ENCODE measurements at regions of chr1 and their contacts with region 1.

Region 1: GRCh38 chr1:12177999-12178441 is 11.2 kb downstream of the TNFRSF1B start:
- DNase-seq: peak; percentile 74
- ATAC-seq: peak; percentile 65
- H3K4me3 Mint-ChIP-seq: peak overlapping the region; percentile 79
- H3K27ac Mint-ChIP-seq: peak overlapping the region; percentile 91
- H3K4me1 Mint-ChIP-seq: peaks cover 81% of the 10 kb centered on the region
- H3K27me3 Mint-ChIP-seq: no peaks in the 10 kb centered on the region

Region 2: GRCh38 chr1:12124693-12125421 is 53.2 kb before region 1 on chr1:
- POLR2A ChIA-PET with region 1: interaction called, 25 read pairs
- DNase-seq: peak; percentile 81
- ATAC-seq: peak; percentile 31
- H3K4me3 Mint-ChIP-seq: peak overlapping the region; percentile 50
- H3K27ac Mint-ChIP-seq: peak overlapping the region; percentile 85
- H3K4me1 Mint-ChIP-seq: peaks cover 32% of the 10 kb centered on the region
- H3K27me3 Mint-ChIP-seq: peaks cover 13% of the 10 kb centered on the region

Region 3: DNA sequence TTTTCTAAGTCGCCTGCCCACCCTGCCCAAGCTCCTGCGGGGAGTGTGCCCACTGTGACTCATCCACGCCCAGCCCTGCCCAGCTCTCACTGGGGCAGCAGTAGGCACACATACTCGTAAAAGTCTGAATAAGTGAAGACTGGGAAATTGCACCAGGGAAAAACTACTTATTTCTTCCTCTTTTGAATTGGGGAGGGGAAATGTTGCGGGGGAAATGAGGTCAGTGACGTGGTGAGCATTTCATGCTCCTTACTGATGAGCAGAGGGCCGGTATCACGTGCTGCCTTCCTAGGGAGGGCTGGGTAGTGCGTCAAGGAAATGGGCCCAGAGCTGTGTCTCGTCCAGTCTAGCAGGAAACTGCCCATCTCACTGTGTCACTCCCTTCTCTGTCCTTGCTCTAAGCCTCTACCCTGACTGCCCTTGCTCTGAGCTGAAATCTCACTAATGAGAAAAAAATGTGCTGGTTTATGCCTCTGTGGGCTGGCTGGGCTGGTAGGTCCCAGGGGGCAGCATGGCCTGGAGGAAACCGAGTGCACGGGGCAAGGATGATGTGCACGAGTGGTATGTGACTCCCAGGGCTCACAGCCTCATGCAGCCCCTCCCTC is 24.7 kb before region 1 on chr1:
- POLR2A ChIA-PET with region 1: interaction called, 67 read pairs
- DNase-seq: no peak
- ATAC-seq: no peak
- H3K4me3 Mint-ChIP-seq: peak overlapping the region; percentile 18
- H3K27ac Mint-ChIP-seq: peak overlapping the region; percentile 99
- H3K4me1 Mint-ChIP-seq: peaks cover 84% of the 10 kb centered on the region
- H3K27me3 Mint-ChIP-seq: no peaks in the 10 kb centered on the region

Region 4: GRCh38 chr1:12161662-12162458 is 16.2 kb before region 1 on chr1:
- POLR2A ChIA-PET with region 1: interaction called, 44 read pairs
- DNase-seq: peak; percentile 74
- ATAC-seq: peak; percentile 88
- H3K4me3 Mint-ChIP-seq: peak overlapping the region; percentile 74
- H3K27ac Mint-ChIP-seq: peak overlapping the region; percentile 98
- H3K4me1 Mint-ChIP-seq: peaks cover 72% of the 10 kb centered on the region
- H3K27me3 Mint-ChIP-seq: no peaks in the 10 kb centered on the region

Region 5: GRCh38 chr1:12166834-12167492 is 11.1 kb before region 1 on chr1 and contains the start of gene TNFRSF1B:
- POLR2A ChIA-PET with region 1: interaction called, 44 read pairs
- DNase-seq: peak; percentile 87
- ATAC-seq: peak; percentile 53
- H3K4me3 Mint-ChIP-seq: peak within 1 kb of the TSS; percentile 100
- H3K27ac Mint-ChIP-seq: peak within 1 kb of the TSS; percentile 99
- H3K4me1 Mint-ChIP-seq: peaks cover 62% of the 10 kb centered on the region
- H3K27me3 Mint-ChIP-seq: no peaks in the 10 kb centered on the region
- total RNA-seq, gene TNFRSF1B: 215 to 246 TPM

Region 6: GRCh38 chr1:12269351-12269750 is 91.3 kb after region 1 on chr1:
- POLR2A ChIA-PET with region 1: no interaction called
- DNase-seq: no peak
- ATAC-seq: no peak
- H3K4me3 Mint-ChIP-seq: no peak overlapping the region
- H3K27ac Mint-ChIP-seq: no peak overlapping the region
- H3K4me1 Mint-ChIP-seq: peaks cover 16% of the 10 kb centered on the region
- H3K27me3 Mint-ChIP-seq: no peaks in the 10 kb centered on the region